Psoas muscle (tissue), 8 donors: ENCODE measurements at regions of chr9 and their contacts with region 1.

Region 1: GRCh38 chr9:106753155-106753671 is 109.8 kb upstream of the ZNF462 start:
- DNase-seq: no peak
- ATAC-seq: no peak
- H3K4me3 ChIP-seq: no peak overlapping the region
- H3K27ac ChIP-seq: peak overlapping the region; percentile 47
- H3K4me1 ChIP-seq: peaks cover 37% of the 10 kb centered on the region
- H3K27me3 ChIP-seq: no peaks in the 10 kb centered on the region
- CTCF ChIP-seq: no peak

Region 2: DNA sequence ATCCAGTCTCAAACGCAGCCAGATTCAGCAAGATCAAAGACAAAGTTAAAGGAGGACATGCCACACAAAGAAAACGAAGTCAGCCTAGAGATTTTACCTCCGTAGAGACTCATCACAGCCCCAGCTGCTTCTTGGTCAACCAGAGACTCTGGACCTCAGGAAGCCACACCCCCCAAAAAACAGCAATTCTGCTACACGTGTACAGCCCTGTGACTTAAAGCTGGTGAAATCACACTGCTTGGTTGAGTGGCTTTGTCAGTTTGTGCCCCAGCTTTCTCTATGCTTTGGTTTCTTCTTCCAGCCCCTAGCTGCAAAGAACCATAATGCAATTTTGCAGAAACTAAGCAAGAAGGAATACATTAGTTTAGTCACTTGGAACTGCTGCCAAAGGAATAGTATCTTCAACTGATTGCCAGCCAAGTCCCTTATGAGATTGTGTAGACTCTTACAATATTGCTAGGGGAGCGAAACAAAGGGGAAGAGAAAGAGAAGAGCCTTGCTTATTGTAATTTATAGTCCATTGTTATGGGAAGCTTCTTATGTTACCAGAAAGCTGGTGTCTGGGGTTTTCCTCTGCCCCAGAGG is 49.1 kb before region 1 on chr9:
- intact Hi-C with region 1: loop called in 1 of 2 experiments (anchors 5 kb)
- DNase-seq: no peak
- ATAC-seq: no peak
- H3K4me3 ChIP-seq: no peak overlapping the region
- H3K27ac ChIP-seq: no peak overlapping the region
- H3K4me1 ChIP-seq: peaks cover 14% of the 10 kb centered on the region
- H3K27me3 ChIP-seq: no peaks in the 10 kb centered on the region
- CTCF ChIP-seq: no peak